Left colon (tissue), 2 donors: ENCODE measurements at regions of chr2 and their contacts with region 1.

Region 1: GRCh38 chr2:102010902-102011301 is 19.1 kb downstream of the IL1R2 start:
- DNase-seq: no peak
- ATAC-seq: no peak

Region 2: DNA sequence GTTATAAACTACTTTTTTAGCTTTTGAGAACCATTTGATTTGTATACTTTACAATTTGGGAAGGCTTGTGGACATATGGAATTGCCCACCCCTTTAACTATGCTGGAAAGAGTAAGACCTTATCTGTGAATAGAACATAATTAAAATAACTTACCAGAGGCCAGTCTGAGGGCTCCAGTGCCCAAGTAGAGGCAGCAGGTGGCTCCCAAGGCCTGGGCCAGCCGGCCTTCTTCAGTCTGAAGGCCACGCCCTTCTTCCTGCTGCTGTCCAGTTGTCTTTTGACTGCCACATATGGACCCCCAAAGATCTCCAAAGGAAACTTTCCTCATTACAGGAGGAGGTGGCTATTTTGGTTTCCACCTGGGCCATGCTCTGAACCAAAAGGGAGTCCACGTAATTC is 400.1 kb after region 1 on chr2:
- intact Hi-C with region 1: no loop called
- DNase-seq: no peak
- ATAC-seq: no peak

Region 3: GRCh38 chr2:102442967-102443828 is 432.3 kb after region 1 on chr2:
- intact Hi-C with region 1: loop called in 1 of 2 experiments (anchors 10 kb)
- DNase-seq: peak in 1 of 2 donors; percentile 13
- ATAC-seq: peak; percentile 73